ENCODE measurements at regions of chr16 and their contacts with region 1.

Region 1: GRCh38 chr16:1346422-1347285 is 5.0 kb downstream of the TSR3 start:
- DNase-seq: no peak
- H3K4me3 ChIP-seq: no peak overlapping the region
- H3K27ac ChIP-seq: no peak overlapping the region
- H3K4me1 ChIP-seq: peaks cover 4% of the 10 kb centered on the region in 2 donors
- H3K27me3 ChIP-seq: no peaks in the 10 kb centered on the region
- CTCF ChIP-seq: no peak
- POLR2A ChIP-seq: no peak

Region 2: GRCh38 chr16:1308977-1309885 is 37.4 kb before region 1 on chr16 and contains the start of gene UBE2I:
- intact Hi-C with region 1: loop called (anchors 2 kb)
- DNase-seq: peak; percentile 96 to 98
- H3K4me3 ChIP-seq: peak within 1 kb of the TSS; percentile 75 to 88 (median 78)
- H3K27ac ChIP-seq: peak within 1 kb of the TSS; percentile 97
- H3K4me1 ChIP-seq: peaks cover 18% of the 10 kb centered on the region in 2 donors
- H3K27me3 ChIP-seq: no peaks in the 10 kb centered on the region
- CTCF ChIP-seq: no peak
- POLR2A ChIP-seq: no peak
- total RNA-seq, gene UBE2I: 52.5 to 67.8 (median 62.2) TPM

Region 3: GRCh38 chr16:1527836-1528811 is 181.5 kb after region 1 on chr16:
- intact Hi-C with region 1: no loop called
- DNase-seq: no peak
- H3K4me3 ChIP-seq: no peak overlapping the region
- H3K27ac ChIP-seq: peak overlapping the region in 1 of 2 donors; percentile 55
- H3K4me1 ChIP-seq: peaks cover 17 to 21% of the 10 kb centered on the region in 2 donors
- H3K27me3 ChIP-seq: no peaks in the 10 kb centered on the region
- CTCF ChIP-seq: no peak
- POLR2A ChIP-seq: no peak